HEK293 (cell line): ENCODE measurements at regions of chr5 and their contacts with region 1.

Region 1: GRCh38 chr5:176660860-176661641 is 13.8 kb downstream of the TSPAN17 start:
- H3K4me3 ChIP-seq: no peak overlapping the region
- H3K27ac ChIP-seq: no peak overlapping the region
- H3K4me1 ChIP-seq: no peaks in the 10 kb centered on the region
- CTCF ChIP-seq: peak; percentile 97

Region 2: GRCh38 chr5:176573564-176574296 is 87.3 kb before region 1 on chr5:
- CTCF ChIA-PET with region 1: interaction called, 13 read pairs
- POLR2A ChIA-PET with region 1: no interaction called
- H3K4me3 ChIP-seq: no peak overlapping the region
- H3K27ac ChIP-seq: no peak overlapping the region
- H3K4me1 ChIP-seq: no peaks in the 10 kb centered on the region
- CTCF ChIP-seq: peak; percentile 82

Region 3: DNA sequence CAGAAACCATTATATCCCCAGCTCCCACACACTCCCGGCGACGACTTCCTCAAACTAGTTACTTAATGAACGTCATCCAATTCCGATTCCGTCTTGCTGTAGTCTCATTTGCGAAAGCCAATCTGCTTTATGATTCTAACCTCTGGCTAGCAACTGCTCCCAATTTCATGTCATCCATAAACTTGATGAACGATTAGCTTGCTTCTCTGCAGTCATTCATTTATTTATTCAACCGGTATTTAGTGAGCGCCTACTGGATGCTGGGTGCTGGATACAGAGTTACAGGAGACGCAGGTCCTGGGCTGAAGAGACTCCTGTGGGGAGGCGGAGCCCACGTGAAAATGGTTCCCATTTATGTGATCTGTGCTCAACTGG is 32.4 kb after region 1 on chr5:
- CTCF ChIA-PET with region 1: interaction called, 17 read pairs
- POLR2A ChIA-PET with region 1: no interaction called
- H3K4me3 ChIP-seq: no peak overlapping the region
- H3K27ac ChIP-seq: no peak overlapping the region
- H3K4me1 ChIP-seq: peaks cover 6% of the 10 kb centered on the region; the same call in 1 of the 2 replicates
- CTCF ChIP-seq: no peak

Region 4: GRCh38 chr5:176803940-176804498 is 143.0 kb after region 1 on chr5:
- CTCF ChIA-PET with region 1: interaction called, 12 read pairs
- POLR2A ChIA-PET with region 1: no interaction called
- H3K4me3 ChIP-seq: no peak overlapping the region
- H3K27ac ChIP-seq: no peak overlapping the region
- H3K4me1 ChIP-seq: no peaks in the 10 kb centered on the region
- CTCF ChIP-seq: no peak

Region 5: GRCh38 chr5:176899296-176899891 is 238.3 kb after region 1 on chr5 and contains the start of gene HK3:
- CTCF ChIA-PET with region 1: interaction called, 26 read pairs
- POLR2A ChIA-PET with region 1: interaction called, 3 read pairs
- H3K4me3 ChIP-seq: no peak within 1 kb of the TSS
- H3K27ac ChIP-seq: no peak within 1 kb of the TSS
- H3K4me1 ChIP-seq: no peaks in the 10 kb centered on the region
- CTCF ChIP-seq: no peak

Region 6: GRCh38 chr5:177071666-177072385 is 410.8 kb after region 1 on chr5:
- CTCF ChIA-PET with region 1: interaction called, 16 read pairs
- POLR2A ChIA-PET with region 1: no interaction called
- H3K4me3 ChIP-seq: no peak overlapping the region
- H3K27ac ChIP-seq: no peak overlapping the region
- H3K4me1 ChIP-seq: no peaks in the 10 kb centered on the region
- CTCF ChIP-seq: peak; percentile 41; the same call in 1 of the 2 replicates